ENCODE measurements at regions of chr17 and their contacts with region 1.

Region 1: GRCh38 chr17:76014184-76014924 is 12.8 kb downstream of the EVPL start:
- DNase-seq: peak; percentile 72 to 79 (median 74)
- H3K4me3 ChIP-seq: no peak overlapping the region
- H3K4me3 Mint-ChIP-seq: peak overlapping the region in 2 of 8 donors; percentile 34 to 52
- H3K27ac ChIP-seq: no peak overlapping the region
- H3K27ac Mint-ChIP-seq: peak overlapping the region in 2 of 7 donors; percentile 50 to 81
- H3K4me1 ChIP-seq: peaks cover 8% of the 10 kb centered on the region
- H3K4me1 Mint-ChIP-seq: peaks cover 3 to 11% (median 6%) of the 10 kb centered on the region in 4 donors
- H3K27me3 ChIP-seq: no peaks in the 10 kb centered on the region
- H3K27me3 Mint-ChIP-seq: no peaks in the 10 kb centered on the region

Region 2: DNA sequence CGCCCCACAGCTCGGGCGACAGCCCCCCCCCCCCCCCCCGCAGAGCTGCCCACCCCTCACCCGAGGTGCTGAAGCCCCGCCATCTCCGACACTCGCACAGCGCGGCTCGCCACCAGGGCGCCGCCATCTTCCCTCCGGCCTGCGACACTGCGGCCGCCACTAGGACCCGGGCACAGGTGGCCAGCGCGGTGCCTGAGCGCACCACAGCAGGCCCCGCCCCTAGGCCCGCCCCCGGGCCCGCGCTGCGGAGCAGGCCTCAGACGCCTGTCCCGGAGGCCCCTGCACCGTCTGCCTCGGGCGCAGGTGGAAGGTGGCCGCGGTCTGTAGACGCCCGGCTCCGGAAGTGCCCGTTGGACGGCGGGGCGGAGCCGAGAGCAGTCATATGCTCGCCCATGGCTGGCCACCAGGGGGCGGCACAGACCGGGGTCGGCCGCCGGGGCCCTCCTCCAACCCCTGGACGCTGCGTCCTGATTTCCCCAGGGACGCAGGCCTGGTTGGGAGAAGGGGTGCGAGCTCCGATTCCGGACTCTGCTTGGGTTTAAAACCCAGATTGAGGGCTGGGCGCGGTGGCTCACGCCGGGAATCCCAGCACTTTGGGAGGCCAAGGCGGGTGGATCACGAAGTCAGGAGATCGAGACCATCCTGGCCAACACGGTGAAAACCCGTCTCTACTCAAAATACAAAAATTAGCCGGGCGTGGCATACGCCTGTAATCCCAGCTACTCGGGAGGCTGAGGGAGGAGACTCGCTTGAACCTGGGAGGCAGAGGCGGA is 109.4 kb before region 1 on chr17 and contains the start of gene MRPL38:
- CTCF ChIA-PET with region 1: interaction called, 28 read pairs
- POLR2A ChIA-PET with region 1: interaction called, 6 read pairs
- intact Hi-C with region 1: no loop called
- DNase-seq: peak; percentile 93 to 98 (median 95)
- H3K4me3 ChIP-seq: peak within 1 kb of the TSS; percentile 57 to 61
- H3K4me3 Mint-ChIP-seq: peak within 1 kb of the TSS; percentile 88 to 93 (median 92)
- H3K27ac ChIP-seq: peak within 1 kb of the TSS; percentile 74
- H3K27ac Mint-ChIP-seq: peak within 1 kb of the TSS; percentile 82 to 98 (median 94)
- H3K4me1 ChIP-seq: peaks cover 17% of the 10 kb centered on the region
- H3K4me1 Mint-ChIP-seq: peaks cover 5 to 20% (median 9%) of the 10 kb centered on the region in 4 donors
- H3K27me3 ChIP-seq: no peaks in the 10 kb centered on the region
- H3K27me3 Mint-ChIP-seq: no peaks in the 10 kb centered on the region
- total RNA-seq, gene MRPL38: 126 to 142 TPM

Region 3: DNA sequence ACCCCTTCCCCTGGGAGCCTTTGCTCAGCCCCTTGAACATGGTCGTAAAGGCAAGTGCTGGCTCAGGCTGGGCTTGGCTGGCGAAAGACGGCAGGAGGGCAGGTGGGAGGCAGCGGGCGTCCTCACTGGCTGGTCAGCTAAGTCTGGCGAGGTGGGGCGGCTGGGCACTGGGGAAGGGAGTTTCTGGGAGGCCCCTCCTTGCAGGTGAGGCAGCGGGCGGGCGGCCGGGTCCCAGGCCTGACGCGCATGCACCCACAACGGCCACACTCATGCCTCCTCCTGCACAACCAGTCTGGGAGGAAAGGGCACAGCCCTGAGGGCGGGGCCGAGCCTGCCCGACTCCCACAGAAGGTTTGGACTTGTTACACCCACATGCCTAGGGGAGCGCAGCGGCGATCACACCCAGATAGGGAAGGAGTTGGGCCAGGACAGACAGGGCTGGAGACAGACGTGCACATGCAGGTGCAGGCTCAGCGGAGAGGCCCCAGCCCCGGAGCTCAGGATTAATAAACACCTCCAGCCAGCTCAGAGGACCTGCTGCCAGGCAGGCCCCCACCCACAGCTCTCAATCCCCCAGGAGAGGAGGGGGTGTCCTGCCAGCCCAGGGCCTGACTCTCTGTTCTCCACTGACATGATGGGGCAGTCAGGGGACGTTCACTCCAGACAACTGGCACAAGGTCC is 12.9 kb after region 1 on chr17 and contains the start of gene EVPL:
- CTCF ChIA-PET with region 1: interaction called, 12 read pairs
- POLR2A ChIA-PET with region 1: interaction called, 3 read pairs
- intact Hi-C with region 1: no loop called
- DNase-seq: no peak
- H3K4me3 ChIP-seq: no peak within 1 kb of the TSS
- H3K4me3 Mint-ChIP-seq: no peak within 1 kb of the TSS
- H3K27ac ChIP-seq: no peak within 1 kb of the TSS
- H3K27ac Mint-ChIP-seq: no peak within 1 kb of the TSS
- H3K4me1 ChIP-seq: peaks cover 12% of the 10 kb centered on the region
- H3K4me1 Mint-ChIP-seq: peaks cover 7 to 14% (median 9%) of the 10 kb centered on the region in 4 donors
- H3K27me3 ChIP-seq: no peaks in the 10 kb centered on the region
- H3K27me3 Mint-ChIP-seq: no peaks in the 10 kb centered on the region
- total RNA-seq, gene EVPL: not detected

Region 4: DNA sequence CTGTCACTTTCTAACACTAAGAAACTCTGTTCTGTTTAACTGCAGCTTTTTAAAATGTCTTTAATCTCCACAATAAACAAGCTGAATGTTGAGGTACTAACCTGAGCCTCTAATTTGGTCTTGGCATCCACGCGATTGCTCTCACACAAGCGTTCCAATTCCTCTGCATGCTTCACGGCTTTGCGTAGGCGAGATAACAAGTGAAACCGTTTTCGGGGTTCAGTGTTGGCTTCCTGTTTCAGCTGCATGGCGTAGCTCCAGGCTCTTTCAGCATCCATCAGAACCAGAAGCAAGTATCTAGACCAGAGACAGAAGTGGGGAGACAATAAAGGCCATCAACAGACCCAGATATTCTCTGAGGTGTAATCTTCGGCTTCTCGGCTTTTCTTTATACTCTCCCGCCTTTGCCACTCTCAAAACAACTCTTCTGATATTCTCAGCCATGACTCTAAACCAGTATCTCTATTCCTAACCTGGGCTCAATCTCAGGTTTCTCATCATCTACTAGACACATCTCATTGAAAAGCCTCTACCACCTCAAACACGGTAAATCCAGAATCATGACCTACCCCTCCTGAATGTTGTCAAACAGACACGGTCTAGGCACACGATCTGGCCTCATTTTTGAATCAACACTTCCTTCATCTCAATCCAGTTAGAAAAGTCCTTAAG is 49.7 kb after region 1 on chr17:
- CTCF ChIA-PET with region 1: interaction called, 19 read pairs
- POLR2A ChIA-PET with region 1: no interaction called
- intact Hi-C with region 1: no loop called
- DNase-seq: peak; percentile 50 to 78 (median 61)
- H3K4me3 ChIP-seq: no peak overlapping the region
- H3K4me3 Mint-ChIP-seq: peak overlapping the region; percentile 69 to 92 (median 74)
- H3K27ac ChIP-seq: peak overlapping the region; percentile 47
- H3K27ac Mint-ChIP-seq: peak overlapping the region; percentile 92 to 98 (median 97)
- H3K4me1 ChIP-seq: peaks cover 16% of the 10 kb centered on the region
- H3K4me1 Mint-ChIP-seq: peaks cover 18 to 34% (median 22%) of the 10 kb centered on the region in 4 donors
- H3K27me3 ChIP-seq: no peaks in the 10 kb centered on the region
- H3K27me3 Mint-ChIP-seq: no peaks in the 10 kb centered on the region

Region 5: DNA sequence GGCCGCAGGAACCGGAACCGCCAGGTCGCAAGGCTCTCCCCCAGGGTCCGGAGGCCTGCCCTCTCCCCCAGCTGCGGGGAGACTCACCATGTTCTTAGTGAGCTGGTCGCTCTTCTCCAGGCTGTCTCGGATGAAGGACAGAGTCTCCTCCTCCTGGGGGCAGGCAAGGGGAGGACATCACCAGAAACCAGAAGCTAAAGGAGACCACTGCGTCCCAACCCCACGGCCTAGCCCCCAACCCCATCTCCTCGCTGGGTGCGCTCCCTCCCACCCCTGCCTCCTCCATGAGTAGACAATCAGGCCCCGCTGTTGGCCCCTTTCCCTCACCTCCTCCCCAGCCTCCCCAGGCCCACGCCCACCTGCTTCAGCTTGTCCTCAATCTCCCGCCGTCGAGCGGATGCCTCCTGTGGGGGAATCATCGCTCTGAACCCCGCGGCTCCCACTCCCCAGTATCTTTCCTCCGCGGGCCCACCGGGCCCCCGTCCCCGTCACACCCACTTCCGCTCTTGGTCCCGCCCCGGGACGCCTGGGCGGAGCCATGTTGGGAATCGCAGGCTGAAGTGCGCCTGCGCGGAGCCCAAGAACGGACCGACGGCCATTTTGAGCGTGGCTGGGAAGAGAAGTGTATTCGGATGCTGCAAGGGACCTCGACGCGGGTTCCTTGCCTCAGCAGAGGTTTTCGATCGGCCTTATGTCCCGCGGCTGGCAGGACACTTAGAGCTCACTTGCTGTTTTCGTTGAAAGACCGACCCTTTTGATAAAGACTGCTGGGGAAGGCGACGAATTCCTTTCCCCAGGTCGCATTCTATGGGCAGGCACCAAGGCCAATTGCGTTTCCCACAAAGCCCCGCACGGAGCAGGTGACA is 89.2 kb after region 1 on chr17 and contains the start of gene EXOC7:
- CTCF ChIA-PET with region 1: interaction called, 16 read pairs
- POLR2A ChIA-PET with region 1: interaction called, 3 read pairs
- intact Hi-C with region 1: loop called (anchors 1 kb)
- DNase-seq: peak; percentile 88 to 95 (median 92)
- H3K4me3 ChIP-seq: peak within 1 kb of the TSS; percentile 84 to 86
- H3K4me3 Mint-ChIP-seq: peak within 1 kb of the TSS; percentile 92 to 98 (median 96)
- H3K27ac ChIP-seq: peak within 1 kb of the TSS; percentile 86
- H3K27ac Mint-ChIP-seq: peak within 1 kb of the TSS; percentile 95 to 99 (median 97)
- H3K4me1 ChIP-seq: peaks cover 27% of the 10 kb centered on the region
- H3K4me1 Mint-ChIP-seq: peaks cover 20 to 49% (median 33%) of the 10 kb centered on the region in 4 donors
- H3K27me3 ChIP-seq: no peaks in the 10 kb centered on the region
- H3K27me3 Mint-ChIP-seq: no peaks in the 10 kb centered on the region
- total RNA-seq, gene EXOC7: 183 to 184 TPM

Region 6: DNA sequence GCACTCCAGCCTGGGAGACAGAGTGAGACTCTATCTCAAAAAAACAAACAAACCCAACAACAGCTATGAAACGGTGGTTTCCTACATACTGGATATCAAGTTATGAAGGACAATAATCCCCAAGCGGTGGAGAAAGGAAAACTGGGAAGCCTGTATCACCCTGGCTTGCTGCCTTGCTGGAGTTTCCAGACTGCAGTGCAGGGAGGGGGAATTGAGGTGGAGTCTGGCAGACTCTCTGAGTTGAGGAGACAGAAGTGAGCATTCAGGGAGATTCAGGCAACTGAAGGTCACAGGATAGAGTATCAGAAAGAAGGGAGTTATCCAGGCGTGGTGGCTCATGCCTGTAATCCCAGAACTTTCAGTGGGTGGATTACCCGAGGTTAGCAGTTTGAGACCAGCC is 281.8 kb after region 1 on chr17:
- CTCF ChIA-PET with region 1: interaction called, 168 read pairs
- POLR2A ChIA-PET with region 1: no interaction called
- intact Hi-C with region 1: loop called (anchors 1 kb)
- DNase-seq: no peak
- H3K4me3 ChIP-seq: no peak overlapping the region
- H3K4me3 Mint-ChIP-seq: no peak overlapping the region
- H3K27ac ChIP-seq: no peak overlapping the region
- H3K27ac Mint-ChIP-seq: peak overlapping the region in 1 of 7 donors; percentile 46
- H3K4me1 ChIP-seq: no peaks in the 10 kb centered on the region
- H3K4me1 Mint-ChIP-seq: peaks cover 0 to 2% (median under 1%) of the 10 kb centered on the region in 4 donors
- H3K27me3 ChIP-seq: no peaks in the 10 kb centered on the region
- H3K27me3 Mint-ChIP-seq: no peaks in the 10 kb centered on the region